CD8-positive, alpha-beta memory T cell (primary cell): ENCODE measurements at regions of chr12 and their contacts with region 1.

Region 1: DNA sequence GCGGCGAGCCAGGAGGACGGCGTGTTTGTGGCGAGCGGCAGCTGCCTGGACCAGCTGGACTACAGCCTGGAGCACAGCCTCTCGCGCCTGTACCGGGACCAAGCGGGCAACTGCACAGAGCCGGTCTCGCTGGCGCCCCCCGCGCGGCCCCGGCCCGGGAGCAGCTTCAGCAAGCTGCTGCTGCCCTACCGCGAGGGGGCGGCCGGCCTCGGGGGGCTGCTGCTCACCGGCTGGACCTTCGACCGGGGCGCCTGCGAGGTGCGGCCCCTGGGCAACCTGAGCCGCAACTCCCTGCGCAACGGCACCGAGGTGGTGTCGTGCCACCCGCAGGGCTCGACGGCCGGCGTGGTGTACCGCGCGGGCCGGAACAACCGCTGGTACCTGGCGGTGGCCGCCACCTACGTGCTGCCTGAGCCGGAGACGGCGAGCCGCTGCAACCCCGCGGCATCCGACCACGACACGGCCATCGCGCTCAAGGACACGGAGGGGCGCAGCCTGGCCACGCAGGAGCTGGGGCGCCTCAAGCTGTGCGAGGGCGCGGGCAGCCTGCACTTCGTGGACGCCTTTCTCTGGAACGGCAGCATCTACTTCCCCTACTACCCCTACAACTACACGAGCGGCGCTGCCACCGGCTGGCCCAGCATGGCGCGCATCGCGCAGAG is 873 bp downstream of the PLXNC1 start:
- DNase-seq: peak; percentile 26 to 60 (median 43)
- H3K4me3 ChIP-seq: peak overlapping the region; percentile 65
- H3K4me3 Mint-ChIP-seq: peak overlapping the region; percentile 87 to 99 (median 95)
- H3K27ac ChIP-seq: no peak overlapping the region
- H3K27ac Mint-ChIP-seq: peak overlapping the region in 1 of 8 donors; percentile 61
- H3K4me1 ChIP-seq: peaks cover 22% of the 10 kb centered on the region
- H3K4me1 Mint-ChIP-seq: peaks cover 32 to 48% (median 35%) of the 10 kb centered on the region in 3 donors
- H3K27me3 ChIP-seq: no peaks in the 10 kb centered on the region
- H3K27me3 Mint-ChIP-seq: peaks cover 0 to 3% of the 10 kb centered on the region in 2 donors

Region 2: GRCh38 chr12:94133964-94134795 is 15.1 kb before region 1 on chr12:
- CTCF ChIA-PET with region 1: interaction called, 10 read pairs
- POLR2A ChIA-PET with region 1: no interaction called
- DNase-seq: peak in 2 of 5 donors; percentile 45 to 50
- H3K4me3 ChIP-seq: no peak overlapping the region
- H3K4me3 Mint-ChIP-seq: no peak overlapping the region
- H3K27ac ChIP-seq: no peak overlapping the region
- H3K27ac Mint-ChIP-seq: no peak overlapping the region
- H3K4me1 ChIP-seq: no peaks in the 10 kb centered on the region
- H3K4me1 Mint-ChIP-seq: peaks cover 2 to 5% (median 4%) of the 10 kb centered on the region in 3 donors
- H3K27me3 ChIP-seq: no peaks in the 10 kb centered on the region
- H3K27me3 Mint-ChIP-seq: peaks cover 2 to 18% of the 10 kb centered on the region in 2 donors

Region 3: GRCh38 chr12:94262228-94263010 is 113.2 kb after region 1 on chr12:
- CTCF ChIA-PET with region 1: interaction called, 10 read pairs
- POLR2A ChIA-PET with region 1: interaction called, 20 read pairs
- DNase-seq: peak; percentile 55 to 87 (median 75)
- H3K4me3 ChIP-seq: peak overlapping the region; percentile 70
- H3K4me3 Mint-ChIP-seq: peak overlapping the region; percentile 96 to 99 (median 97)
- H3K27ac ChIP-seq: peak overlapping the region; percentile 75
- H3K27ac Mint-ChIP-seq: peak overlapping the region; percentile 98 to 100 (median 99)
- H3K4me1 ChIP-seq: peaks cover 24% of the 10 kb centered on the region
- H3K4me1 Mint-ChIP-seq: peaks cover 32 to 47% (median 44%) of the 10 kb centered on the region in 3 donors
- H3K27me3 ChIP-seq: no peaks in the 10 kb centered on the region
- H3K27me3 Mint-ChIP-seq: peaks cover 0 to 7% of the 10 kb centered on the region in 2 donors